Left ventricle myocardium inferior (tissue), 1 donor: ENCODE measurements at regions of chr14 and their contacts with region 1.

Region 1: DNA sequence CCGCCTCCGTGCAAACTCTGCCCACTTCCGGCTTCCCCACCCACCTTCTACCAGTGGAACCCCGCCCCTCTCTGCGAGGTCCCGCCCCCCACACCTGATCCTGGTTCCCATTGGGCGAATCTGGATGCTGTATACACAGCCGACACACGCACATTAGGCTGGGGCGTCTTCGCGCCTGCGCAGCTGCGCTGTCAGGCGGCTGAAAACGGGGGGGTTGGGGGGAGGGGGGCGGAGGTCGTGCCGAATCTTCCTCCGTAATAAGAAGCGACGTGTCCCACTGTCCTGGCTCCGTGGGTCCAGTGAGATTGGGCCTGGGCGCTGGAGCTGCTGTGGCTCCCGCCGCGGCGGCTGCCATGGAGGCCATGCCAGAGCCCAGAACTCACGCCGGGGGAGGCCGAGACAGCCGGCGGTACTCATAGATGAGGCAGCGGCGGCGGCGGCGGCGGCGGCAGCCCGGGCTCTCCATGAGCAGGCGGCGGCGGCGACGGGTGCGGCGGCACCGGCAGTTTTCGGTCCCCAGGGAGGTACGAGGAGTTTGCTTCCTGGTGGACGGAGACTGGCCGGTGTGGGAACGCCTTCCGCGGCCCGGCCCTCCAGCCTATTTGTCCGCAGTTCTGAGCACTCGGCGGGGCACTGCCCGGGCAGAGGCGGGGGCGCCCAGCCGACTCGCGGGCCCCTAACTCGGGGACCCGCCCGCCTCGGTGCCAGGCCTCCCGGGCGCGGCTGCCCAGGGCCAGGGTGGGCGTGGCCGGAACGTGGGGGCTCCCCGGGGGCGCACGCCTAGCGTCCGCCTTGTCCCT is 64.5 kb downstream of the KLHL28 start:
- DNase-seq: peak; percentile 99
- H3K4me3 ChIP-seq: peak overlapping the region; percentile 90
- H3K27ac ChIP-seq: peak overlapping the region; percentile 100
- H3K4me1 ChIP-seq: peaks cover 44% of the 10 kb centered on the region
- H3K27me3 ChIP-seq: no peaks in the 10 kb centered on the region
- CTCF ChIP-seq: no peak

Region 2: DNA sequence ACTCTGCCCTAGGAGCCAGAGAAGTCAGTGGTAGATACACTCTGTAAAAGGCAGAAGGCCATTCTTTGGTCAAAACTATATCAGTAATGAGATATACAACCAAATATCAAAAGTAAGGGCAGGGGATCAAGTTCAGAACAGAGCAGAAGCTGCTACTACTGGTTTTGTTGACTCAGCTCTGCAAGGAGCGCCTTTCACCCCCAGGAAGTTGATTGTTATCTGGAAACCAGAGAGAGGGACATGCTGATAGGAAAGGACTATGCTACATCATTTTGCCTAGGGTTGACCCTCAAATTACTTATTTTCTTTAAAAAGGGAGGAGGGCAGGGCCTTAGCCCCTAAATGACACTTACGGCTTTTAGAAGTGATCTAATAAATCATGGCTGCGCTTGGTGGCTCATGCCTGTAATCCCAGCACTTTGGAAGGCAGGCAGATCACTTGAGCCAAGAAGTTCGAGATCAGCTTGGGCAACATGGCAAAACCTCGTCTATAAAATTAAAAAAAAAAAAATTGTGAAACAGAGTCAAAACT is 129.5 kb before region 1 on chr14:
- intact Hi-C with region 1: no loop called
- DNase-seq: no peak
- H3K4me3 ChIP-seq: no peak overlapping the region
- H3K27ac ChIP-seq: no peak overlapping the region
- H3K4me1 ChIP-seq: no peaks in the 10 kb centered on the region
- H3K27me3 ChIP-seq: no peaks in the 10 kb centered on the region
- CTCF ChIP-seq: no peak

Region 3: GRCh38 chr14:45253068-45253753 is 356.0 kb after region 1 on chr14 and contains the start of gene MIS18BP1:
- intact Hi-C with region 1: loop called (anchors 10 kb)
- DNase-seq: peak; percentile 94
- H3K4me3 ChIP-seq: peak within 1 kb of the TSS; percentile 95
- H3K27ac ChIP-seq: peak within 1 kb of the TSS; percentile 99
- H3K4me1 ChIP-seq: peaks cover 50% of the 10 kb centered on the region
- H3K27me3 ChIP-seq: no peaks in the 10 kb centered on the region
- CTCF ChIP-seq: peak; percentile 88
- total RNA-seq, gene MIS18BP1: 6.9 TPM